Vagina (tissue), 2 donors: ENCODE measurements at regions of chr7 and their contacts with region 1.

Region 1: DNA sequence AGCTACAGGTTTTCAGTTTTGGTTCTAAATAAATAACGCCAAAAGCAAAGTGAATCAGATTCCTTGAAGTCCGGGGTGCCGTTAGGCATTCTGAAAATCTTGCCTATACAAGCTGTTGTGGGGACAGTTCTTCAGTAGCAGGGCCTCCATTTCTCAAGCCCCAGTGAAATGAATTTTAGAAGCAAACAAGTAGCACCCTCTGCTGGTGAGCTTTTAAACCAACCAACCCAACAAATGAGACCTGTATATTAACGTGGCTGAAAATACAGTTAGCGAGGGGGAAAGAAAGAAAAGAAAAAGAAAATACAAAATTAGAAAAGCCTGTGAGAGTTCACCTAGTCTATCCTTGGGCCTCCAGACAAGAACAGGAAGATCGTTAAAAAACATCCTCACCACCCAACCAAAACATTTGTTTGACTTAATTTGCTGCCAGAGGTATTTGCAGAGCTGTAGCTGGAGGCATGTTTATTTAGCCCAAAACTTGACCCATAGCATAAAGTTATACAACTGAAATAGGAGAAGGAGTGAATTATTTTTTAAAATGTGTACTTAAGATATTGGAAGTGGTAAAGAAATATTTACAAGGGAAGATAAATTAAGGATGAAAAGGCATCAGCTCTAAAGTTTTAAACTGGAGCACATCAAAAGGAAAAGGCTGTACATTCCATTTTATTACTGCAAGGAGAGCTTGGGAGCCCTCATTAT is 98.9 kb downstream of the DYNC1I1 start:
- DNase-seq: no peak
- H3K4me3 ChIP-seq: no peak overlapping the region
- H3K27ac ChIP-seq: no peak overlapping the region
- H3K4me1 ChIP-seq: no peaks in the 10 kb centered on the region
- H3K27me3 ChIP-seq: no peaks in the 10 kb centered on the region
- CTCF ChIP-seq: peak in 2 of 3 experiments; percentile 59 to 69
- POLR2A ChIP-seq: no peak

Region 2: GRCh38 chr7:95723592-95724180 is 147.5 kb before region 1 on chr7:
- intact Hi-C with region 1: loop called (anchors 5 kb)
- DNase-seq: no peak
- H3K4me3 ChIP-seq: no peak overlapping the region
- H3K27ac ChIP-seq: no peak overlapping the region
- H3K4me1 ChIP-seq: no peaks in the 10 kb centered on the region
- H3K27me3 ChIP-seq: no peaks in the 10 kb centered on the region
- CTCF ChIP-seq: peak in 1 of 3 experiments; percentile 25
- POLR2A ChIP-seq: no peak